ENCODE measurements at regions of chr7 and their contacts with region 1.

Region 1: GRCh38 chr7:134605973-134606923 is 40.4 kb upstream of the BPGM start:
- DNase-seq: peak; percentile 69
- ATAC-seq: peak; percentile 95

Region 2: GRCh38 chr7:134432296-134433152 is 173.7 kb before region 1 on chr7:
- intact Hi-C with region 1: loop called (anchors 2 kb)
- DNase-seq: peak; percentile 92
- ATAC-seq: peak; percentile 98

Region 3: DNA sequence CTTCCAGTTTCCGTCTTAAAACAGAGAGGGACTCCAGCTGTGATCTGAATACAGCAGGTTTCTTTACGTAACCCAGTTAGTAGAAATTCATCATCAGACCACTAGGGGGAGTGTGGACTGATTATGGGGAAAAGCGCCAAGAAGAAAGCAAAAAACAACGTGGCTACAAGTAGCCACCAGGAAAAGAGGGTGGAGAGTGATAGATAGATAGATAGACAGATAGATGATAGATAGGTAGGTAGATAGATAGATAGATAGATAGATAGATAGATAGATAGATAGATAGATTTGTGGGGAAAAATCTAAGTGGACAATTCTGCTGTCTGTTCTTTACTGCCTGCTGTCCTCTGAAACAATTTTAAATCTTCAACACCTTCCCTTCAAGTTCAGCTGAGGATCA is 91.6 kb before region 1 on chr7:
- intact Hi-C with region 1: loop called (anchors 2 kb)
- DNase-seq: no peak
- ATAC-seq: peak; percentile 62

Region 4: GRCh38 chr7:134547397-134548054 is 58.7 kb before region 1 on chr7:
- intact Hi-C with region 1: loop called (anchors 10 kb)
- DNase-seq: peak; percentile 80
- ATAC-seq: peak; percentile 97

Measured in Right ventricle myocardium superior (tissue), 1 donor.